ENCODE measurements at regions of chr16 and their contacts with region 1.

Region 1: DNA sequence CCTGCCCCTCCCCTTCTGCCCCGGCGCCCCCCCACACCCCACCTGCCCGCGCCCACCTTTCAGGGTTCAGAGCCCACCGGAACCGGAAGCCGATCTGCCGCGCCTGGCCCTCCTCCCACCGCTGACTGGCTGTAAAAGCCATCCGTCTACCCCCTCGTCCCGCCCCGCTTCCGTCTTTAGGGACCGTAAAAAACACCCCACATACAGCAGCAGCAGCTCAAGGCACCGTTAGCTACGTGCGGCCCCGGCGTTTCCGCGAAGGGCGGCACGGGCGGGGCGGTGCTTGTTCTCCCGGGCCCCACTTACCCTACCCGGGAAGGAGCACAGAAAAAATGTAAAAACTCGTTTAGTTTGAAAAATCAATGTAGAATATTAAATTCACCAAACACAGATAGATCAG is at the start of gene MRPL28:
- DNase-seq: peak; percentile 97
- ATAC-seq: peak; percentile 100
- H3K4me3 Mint-ChIP-seq: peak within 1 kb of the TSS; percentile 78
- H3K27ac Mint-ChIP-seq: peak within 1 kb of the TSS; percentile 92
- H3K4me1 Mint-ChIP-seq: peaks cover 17% of the 10 kb centered on the region
- H3K27me3 Mint-ChIP-seq: no peaks in the 10 kb centered on the region
- total RNA-seq, gene MRPL28: 90.2 to 94.4 TPM

Region 2: GRCh38 chr16:381789-382717 is 11.6 kb after region 1 on chr16 and contains the start of gene PGAP6:
- CTCF ChIA-PET with region 1: interaction called, 6 read pairs
- POLR2A ChIA-PET with region 1: no interaction called
- intact Hi-C with region 1: loop called (anchors 1 kb)
- DNase-seq: peak; percentile 83
- ATAC-seq: peak; percentile 73
- H3K4me3 Mint-ChIP-seq: peak within 1 kb of the TSS; percentile 74
- H3K27ac Mint-ChIP-seq: no peak within 1 kb of the TSS
- H3K4me1 Mint-ChIP-seq: peaks cover 24% of the 10 kb centered on the region
- H3K27me3 Mint-ChIP-seq: no peaks in the 10 kb centered on the region
- total RNA-seq, gene PGAP6: 22.9 to 40.8 TPM